ENCODE measurements at regions of chr2 and their contacts with region 1.

Region 1: GRCh38 chr2:157194097-157194688 is 63.3 kb upstream of the GALNT5 start:
- DNase-seq: no peak
- H3K4me3 ChIP-seq: no peak overlapping the region
- H3K27ac ChIP-seq: no peak overlapping the region
- H3K4me1 ChIP-seq: no peaks in the 10 kb centered on the region
- H3K27me3 ChIP-seq: no peaks in the 10 kb centered on the region
- CTCF ChIP-seq: peak; percentile 41 to 76 (median 53)

Region 2: GRCh38 chr2:157032017-157032416 is 162.2 kb before region 1 on chr2:
- intact Hi-C with region 1: loop called (anchors 10 kb)
- DNase-seq: no peak
- H3K4me3 ChIP-seq: no peak overlapping the region
- H3K27ac ChIP-seq: no peak overlapping the region
- H3K4me1 ChIP-seq: no peaks in the 10 kb centered on the region
- H3K27me3 ChIP-seq: no peaks in the 10 kb centered on the region
- CTCF ChIP-seq: no peak